Activated T-helper 1 cell treated with anti-CD3 and anti-CD28 coated beads, Interleukin-12 subunit alpha, Interleukin-12 subunit beta, Interleukin-2, Interleukin-4 antibody, amounts not matched to agents 30 ng/mL and 10 ng/mL and 1 ng/mL, durations not matched to agents 14 hours and 24 hours and 36 hours (primary cell): ENCODE measurements at regions of chr15 and their contacts with region 1.

Region 1: DNA sequence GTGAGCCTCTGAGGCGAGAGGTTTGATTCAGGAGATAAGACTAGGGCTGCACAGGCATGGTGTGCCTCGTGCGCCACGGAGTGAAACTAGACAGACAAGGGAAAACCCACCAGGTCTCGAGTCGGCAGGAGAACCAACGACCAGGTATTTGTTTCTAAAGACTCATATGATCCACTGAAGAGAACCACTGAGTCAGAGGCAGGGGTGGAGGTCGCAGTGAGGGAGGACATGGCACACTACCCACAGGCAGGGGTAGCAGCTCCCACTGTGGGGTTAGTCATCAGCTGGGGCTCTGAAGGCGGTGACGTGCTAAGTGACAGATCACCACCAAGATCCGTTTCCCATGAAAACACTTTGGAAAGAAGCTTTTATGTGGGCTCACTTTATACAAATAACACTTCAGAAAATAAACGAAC is 45.7 kb downstream of the CHSY1 start:
- DNase-seq: peak; percentile 68
- H3K4me3 Mint-ChIP-seq: peak overlapping the region; percentile 86
- H3K27ac Mint-ChIP-seq: peak overlapping the region; percentile 97
- H3K4me1 Mint-ChIP-seq: peaks cover 89% of the 10 kb centered on the region
- H3K27me3 Mint-ChIP-seq: no peaks in the 10 kb centered on the region

Region 2: GRCh38 chr15:100596792-100597191 is 609.4 kb before region 1 on chr15:
- intact Hi-C with region 1: loop called (anchors 1 kb)
- DNase-seq: peak; percentile 92
- H3K4me3 Mint-ChIP-seq: peak overlapping the region; percentile 86
- H3K27ac Mint-ChIP-seq: peak overlapping the region; percentile 97
- H3K4me1 Mint-ChIP-seq: peaks cover 69% of the 10 kb centered on the region
- H3K27me3 Mint-ChIP-seq: peaks cover 3% of the 10 kb centered on the region

Region 3: GRCh38 chr15:101127506-101128076 is 78.6 kb before region 1 on chr15:
- intact Hi-C with region 1: loop called (anchors 2 kb)
- DNase-seq: peak; percentile 41
- H3K4me3 Mint-ChIP-seq: peak overlapping the region; percentile 75
- H3K27ac Mint-ChIP-seq: peak overlapping the region; percentile 90
- H3K4me1 Mint-ChIP-seq: peaks cover 63% of the 10 kb centered on the region
- H3K27me3 Mint-ChIP-seq: no peaks in the 10 kb centered on the region

Region 4: GRCh38 chr15:101167753-101168463 is 38.3 kb before region 1 on chr15:
- intact Hi-C with region 1: loop called (anchors 1 kb)
- DNase-seq: peak; percentile 77
- H3K4me3 Mint-ChIP-seq: peak overlapping the region; percentile 58
- H3K27ac Mint-ChIP-seq: peak overlapping the region; percentile 88
- H3K4me1 Mint-ChIP-seq: peaks cover 58% of the 10 kb centered on the region
- H3K27me3 Mint-ChIP-seq: no peaks in the 10 kb centered on the region

Region 5: GRCh38 chr15:101188637-101189408 is 17.4 kb before region 1 on chr15:
- intact Hi-C with region 1: loop called (anchors 1 kb)
- DNase-seq: no peak
- H3K4me3 Mint-ChIP-seq: peak overlapping the region; percentile 41
- H3K27ac Mint-ChIP-seq: peak overlapping the region; percentile 94
- H3K4me1 Mint-ChIP-seq: peaks cover 87% of the 10 kb centered on the region
- H3K27me3 Mint-ChIP-seq: no peaks in the 10 kb centered on the region

Region 6: GRCh38 chr15:101242160-101242998 is 36.2 kb after region 1 on chr15:
- intact Hi-C with region 1: loop called (anchors 1 kb)
- DNase-seq: peak; percentile 68
- H3K4me3 Mint-ChIP-seq: peak overlapping the region; percentile 60
- H3K27ac Mint-ChIP-seq: peak overlapping the region; percentile 89
- H3K4me1 Mint-ChIP-seq: peaks cover 100% of the 10 kb centered on the region
- H3K27me3 Mint-ChIP-seq: no peaks in the 10 kb centered on the region

Region 7: DNA sequence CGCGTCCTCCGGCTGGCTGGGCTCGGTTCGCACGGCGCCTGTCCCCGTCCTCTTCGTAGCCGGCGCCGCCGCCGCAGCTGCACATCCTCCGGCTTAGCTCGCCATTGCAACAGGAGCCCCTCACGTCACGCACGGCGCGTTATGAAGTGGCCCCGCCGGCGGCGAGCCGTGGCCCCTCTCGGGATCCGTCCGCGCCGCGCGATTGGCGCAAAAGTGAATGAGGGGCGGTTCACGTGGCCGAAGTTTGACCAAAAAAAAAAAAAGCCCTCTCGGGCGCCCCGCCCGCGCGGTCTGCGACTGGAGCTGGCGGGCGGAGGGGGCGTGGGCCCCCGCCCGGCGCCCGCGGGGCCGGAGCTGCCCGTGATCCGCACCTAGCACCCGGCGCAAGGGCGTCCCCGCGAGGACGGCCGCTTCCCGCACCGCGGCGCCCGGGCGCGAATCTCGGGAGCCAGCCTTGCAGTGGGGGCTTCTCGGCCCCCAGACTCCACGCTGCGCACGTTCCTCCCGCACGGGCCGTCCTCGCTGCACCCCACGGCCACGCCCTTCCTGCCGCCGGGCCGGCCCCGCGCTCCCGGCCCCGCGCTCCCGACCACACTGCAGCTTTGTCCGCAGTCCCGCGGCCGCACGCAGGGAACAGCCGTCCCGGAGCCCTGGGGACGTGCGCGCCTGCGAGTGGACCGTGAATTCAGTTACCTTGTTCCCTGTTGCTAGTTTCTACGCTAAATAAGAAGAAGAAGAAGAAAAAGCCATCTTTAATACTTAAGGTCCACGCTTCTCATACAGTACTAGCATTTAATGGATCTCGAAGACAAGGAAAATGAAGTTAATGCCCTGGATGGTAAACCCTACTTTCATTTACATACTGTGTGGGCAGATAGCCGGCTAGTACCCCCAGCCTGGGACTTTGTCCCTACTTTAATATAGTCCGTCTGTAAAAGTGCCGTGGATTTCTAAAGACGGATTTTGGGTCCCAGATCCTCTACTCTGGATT is 45.9 kb after region 1 on chr15 and contains the start of gene CHSY1:
- intact Hi-C with region 1: loop called (anchors 1 kb)
- DNase-seq: peak; percentile 88
- H3K4me3 Mint-ChIP-seq: peak within 1 kb of the TSS; percentile 91
- H3K27ac Mint-ChIP-seq: peak within 1 kb of the TSS; percentile 90
- H3K4me1 Mint-ChIP-seq: peaks cover 69% of the 10 kb centered on the region
- H3K27me3 Mint-ChIP-seq: no peaks in the 10 kb centered on the region
- total RNA-seq, gene CHSY1: 76.3 and 78.0 TPM in 2 replicates